ENCODE measurements at regions of chr19 and their contacts with region 1.

Region 1: DNA sequence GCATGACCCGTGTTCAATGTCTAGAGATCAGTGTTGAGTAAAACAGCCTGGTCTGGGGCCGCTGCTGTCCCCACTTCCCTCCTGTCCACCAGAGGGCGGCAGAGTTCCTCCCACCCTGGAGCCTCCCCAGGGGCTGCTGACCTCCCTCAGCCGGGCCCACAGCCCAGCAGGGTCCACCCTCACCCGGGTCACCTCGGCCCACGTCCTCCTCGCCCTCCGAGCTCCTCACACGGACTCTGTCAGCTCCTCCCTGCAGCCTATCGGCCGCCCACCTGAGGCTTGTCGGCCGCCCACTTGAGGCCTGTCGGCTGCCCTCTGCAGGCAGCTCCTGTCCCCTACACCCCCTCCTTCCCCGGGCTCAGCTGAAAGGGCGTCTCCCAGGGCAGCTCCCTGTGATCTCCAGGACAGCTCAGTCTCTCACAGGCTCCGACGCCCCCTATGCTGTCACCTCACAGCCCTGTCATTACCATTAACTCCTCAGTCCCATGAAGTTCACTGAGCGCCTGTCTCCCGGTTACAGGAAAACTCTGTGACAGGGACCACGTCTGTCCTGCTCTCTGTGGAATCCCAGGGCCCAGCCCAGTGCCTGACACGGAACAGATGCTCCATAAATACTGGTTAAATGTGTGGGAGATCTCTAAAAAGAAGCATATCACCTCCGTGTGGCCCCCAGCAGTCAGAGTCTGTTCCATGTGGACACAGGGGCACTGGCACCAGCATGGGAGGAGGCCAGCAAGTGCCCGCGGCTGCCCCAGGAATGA is 1.5 kb upstream of the CEACAM5 start:
- DNase-seq: peak; percentile 87
- H3K4me3 ChIP-seq: peak overlapping the region; percentile 33
- H3K27ac ChIP-seq: peak overlapping the region; percentile 75
- H3K4me1 ChIP-seq: peaks cover 7% of the 10 kb centered on the region
- H3K27me3 ChIP-seq: no peaks in the 10 kb centered on the region
- CTCF ChIP-seq: peak; percentile 94

Region 2: GRCh38 chr19:41657157-41657556 is 49.8 kb before region 1 on chr19:
- intact Hi-C with region 1: no loop called
- DNase-seq: no peak
- H3K4me3 ChIP-seq: no peak overlapping the region
- H3K27ac ChIP-seq: no peak overlapping the region
- H3K4me1 ChIP-seq: no peaks in the 10 kb centered on the region
- H3K27me3 ChIP-seq: no peaks in the 10 kb centered on the region
- CTCF ChIP-seq: no peak

Region 3: GRCh38 chr19:41746593-41747227 is 39.8 kb after region 1 on chr19:
- intact Hi-C with region 1: loop called (anchors 2 kb)
- DNase-seq: peak; percentile 84
- H3K4me3 ChIP-seq: no peak overlapping the region
- H3K27ac ChIP-seq: peak overlapping the region; percentile 88
- H3K4me1 ChIP-seq: peaks cover 6% of the 10 kb centered on the region
- H3K27me3 ChIP-seq: no peaks in the 10 kb centered on the region
- CTCF ChIP-seq: peak; percentile 55

Region 4: GRCh38 chr19:41821003-41821735 is 114.2 kb after region 1 on chr19:
- intact Hi-C with region 1: no loop called
- DNase-seq: peak; percentile 60
- H3K4me3 ChIP-seq: no peak overlapping the region
- H3K27ac ChIP-seq: no peak overlapping the region
- H3K4me1 ChIP-seq: no peaks in the 10 kb centered on the region
- H3K27me3 ChIP-seq: no peaks in the 10 kb centered on the region
- CTCF ChIP-seq: peak; percentile 55

Measured in colonic mucosa (tissue), 4 donors.